ENCODE measurements at regions of chr4 and their contacts with region 1.

Region 1: DNA sequence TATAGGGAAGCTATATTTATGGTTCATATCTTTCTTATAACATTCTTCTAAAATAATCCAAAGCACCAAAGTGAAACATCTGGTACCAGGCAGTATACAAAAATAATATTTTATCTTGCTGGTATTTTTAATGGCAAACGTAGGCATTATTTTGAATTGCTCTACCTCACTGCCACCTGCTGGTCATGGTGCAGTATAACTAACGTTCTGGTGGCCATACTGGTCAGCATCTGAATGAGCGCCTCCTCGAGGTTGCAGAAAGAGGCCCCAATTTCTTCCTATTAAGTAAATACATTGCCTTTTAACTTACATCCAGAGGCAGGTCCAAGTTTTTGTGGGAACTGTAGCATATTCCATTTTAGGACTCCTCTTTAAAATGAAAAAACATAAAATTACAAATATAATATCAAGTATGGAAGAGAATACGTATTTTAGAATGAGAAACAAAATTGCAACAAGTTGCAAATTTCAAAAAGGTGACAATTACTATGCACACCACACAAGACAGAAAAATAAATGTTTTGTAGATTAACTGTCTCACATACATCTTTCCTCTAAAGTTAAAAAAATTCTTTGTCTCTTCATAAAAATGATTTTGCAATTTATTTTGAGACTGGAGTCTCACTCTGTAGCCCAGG is 22.9 kb upstream of the CWH43 start:
- DNase-seq: peak; percentile 89
- H3K4me3 ChIP-seq: no peak overlapping the region
- H3K27ac ChIP-seq: no peak overlapping the region
- H3K4me1 ChIP-seq: no peaks in the 10 kb centered on the region
- CTCF ChIP-seq: peak; percentile 100

Region 2: DNA sequence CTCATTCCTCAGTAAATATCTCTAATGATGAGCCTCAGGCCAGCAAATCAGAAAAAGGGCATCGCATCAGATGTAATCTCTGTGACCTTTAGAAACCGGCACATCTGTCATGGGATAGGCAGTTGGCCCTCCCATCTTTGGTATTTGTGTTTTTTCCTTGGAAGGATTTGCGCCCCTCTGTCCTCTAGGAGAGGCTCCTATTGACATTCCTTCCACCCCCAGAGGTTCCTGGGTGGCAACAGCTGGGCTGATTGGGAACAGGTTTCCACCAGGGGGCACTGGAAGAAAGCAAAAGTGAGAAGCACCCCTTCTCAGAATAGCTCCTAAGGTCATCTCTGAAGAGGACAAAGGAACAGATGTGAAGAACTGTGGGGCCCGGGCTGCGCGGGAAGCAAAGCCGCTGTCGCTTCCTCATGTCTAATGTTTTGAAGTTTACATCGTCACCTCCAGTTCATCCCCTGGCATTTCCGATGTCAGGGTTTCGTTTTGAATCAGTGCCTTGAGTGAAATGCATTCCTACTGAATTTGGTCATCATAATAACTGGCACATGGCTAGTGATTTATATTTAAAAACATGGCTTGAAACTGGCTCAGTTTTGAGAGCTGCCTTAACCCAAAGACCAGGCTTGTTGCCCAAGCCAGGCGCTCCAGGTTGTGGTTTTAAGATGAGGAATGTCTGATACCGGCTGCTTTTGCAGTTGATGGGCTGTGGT is 835.3 kb before region 1 on chr4:
- CTCF ChIA-PET with region 1: no interaction called
- POLR2A ChIA-PET with region 1: no interaction called
- intact Hi-C with region 1: loop called (anchors 10 kb)
- DNase-seq: peak; percentile 65
- H3K4me3 ChIP-seq: no peak overlapping the region
- H3K27ac ChIP-seq: no peak overlapping the region
- H3K4me1 ChIP-seq: no peaks in the 10 kb centered on the region
- CTCF ChIP-seq: peak; percentile 82

Region 3: DNA sequence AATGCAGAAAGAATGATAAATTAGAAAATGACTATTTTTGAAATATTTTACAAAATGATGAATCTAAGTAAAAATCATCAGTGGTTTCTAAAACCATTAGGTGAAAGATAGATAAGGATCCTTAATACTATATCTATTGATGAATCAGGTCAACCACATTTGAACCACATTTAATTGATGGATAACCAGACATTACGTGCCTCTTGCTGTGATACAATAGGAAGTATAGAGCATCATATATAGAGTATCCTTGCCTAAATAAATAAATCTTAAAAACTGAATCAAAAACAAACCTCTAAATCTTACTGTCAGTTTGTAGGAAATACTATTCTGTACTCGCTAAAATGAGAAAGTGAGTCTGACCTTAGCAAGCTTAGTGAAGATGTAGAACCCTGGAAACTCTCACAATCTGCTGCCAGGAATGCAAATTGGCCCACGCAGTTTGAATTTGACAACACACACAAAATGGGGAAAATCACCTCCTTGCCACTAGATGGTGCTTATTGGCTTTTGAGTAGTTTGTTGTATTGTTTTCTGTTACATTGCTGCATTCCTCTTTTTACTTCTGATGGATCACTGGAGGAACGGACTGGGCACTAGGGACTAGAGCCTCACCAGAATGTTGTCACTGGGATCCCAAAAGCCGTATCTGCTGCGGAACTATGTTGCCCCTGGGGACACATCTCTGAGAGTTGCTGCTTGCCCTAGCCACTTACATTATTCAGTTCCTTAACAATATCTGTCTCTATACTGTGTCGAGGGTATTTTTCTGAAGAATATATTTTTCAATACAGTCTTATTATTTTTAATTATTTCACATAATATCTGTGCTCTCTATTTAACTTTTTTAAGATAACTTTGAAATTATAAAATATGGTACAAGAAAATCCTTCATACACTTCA is 647.2 kb before region 1 on chr4:
- CTCF ChIA-PET with region 1: no interaction called
- POLR2A ChIA-PET with region 1: no interaction called
- intact Hi-C with region 1: loop called (anchors 5 kb)
- DNase-seq: peak; percentile 53
- H3K4me3 ChIP-seq: no peak overlapping the region
- H3K27ac ChIP-seq: no peak overlapping the region
- H3K4me1 ChIP-seq: no peaks in the 10 kb centered on the region
- CTCF ChIP-seq: peak; percentile 85

Region 4: GRCh38 chr4:48445704-48446103 is 517.5 kb before region 1 on chr4:
- CTCF ChIA-PET with region 1: no interaction called
- POLR2A ChIA-PET with region 1: no interaction called
- intact Hi-C with region 1: loop called (anchors 2 kb)
- DNase-seq: peak; percentile 19
- H3K4me3 ChIP-seq: no peak overlapping the region
- H3K27ac ChIP-seq: no peak overlapping the region
- H3K4me1 ChIP-seq: no peaks in the 10 kb centered on the region
- CTCF ChIP-seq: peak; percentile 72

Region 5: DNA sequence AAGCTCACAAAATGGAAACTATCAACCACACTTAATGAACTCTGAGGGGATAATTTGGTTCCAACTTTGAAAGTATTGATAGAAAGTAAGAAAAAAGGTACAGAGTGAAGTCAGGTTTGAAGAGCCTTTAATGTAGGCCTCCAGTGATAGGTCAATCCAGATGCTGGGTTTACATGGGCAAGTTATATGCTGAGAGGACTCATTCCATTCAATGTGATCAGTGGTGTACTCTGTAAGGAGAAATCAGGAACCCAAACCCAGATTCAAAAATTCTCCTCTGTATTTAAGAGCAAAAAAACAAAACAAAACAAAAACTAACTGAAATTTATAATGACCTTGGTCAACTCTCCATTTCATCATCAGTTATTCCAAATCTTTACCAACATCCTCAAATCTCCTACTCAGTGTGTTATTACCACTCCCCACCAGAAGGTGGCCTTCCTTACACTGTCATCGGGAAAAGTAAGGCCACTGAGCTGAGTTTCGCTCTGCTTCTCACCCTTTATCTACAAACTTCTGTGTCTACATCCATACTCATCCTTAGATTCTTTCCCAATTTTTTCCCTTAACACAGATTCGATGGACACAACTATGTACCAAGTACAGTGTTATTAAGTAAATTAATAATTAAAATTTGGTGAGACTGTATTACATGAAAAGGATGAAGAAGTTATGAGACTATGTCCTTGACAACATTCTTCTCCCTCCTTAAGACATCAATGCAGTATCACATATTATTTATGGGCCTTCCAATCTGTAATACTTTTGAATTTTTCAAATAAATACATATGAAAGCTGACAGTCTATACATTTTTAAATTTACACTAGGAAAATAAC is 384.8 kb before region 1 on chr4:
- CTCF ChIA-PET with region 1: no interaction called
- POLR2A ChIA-PET with region 1: interaction called, 4 read pairs
- intact Hi-C with region 1: loop called (anchors 1 kb)
- DNase-seq: peak; percentile 72
- H3K4me3 ChIP-seq: no peak overlapping the region
- H3K27ac ChIP-seq: no peak overlapping the region
- H3K4me1 ChIP-seq: no peaks in the 10 kb centered on the region
- CTCF ChIP-seq: peak; percentile 96

Region 6: DNA sequence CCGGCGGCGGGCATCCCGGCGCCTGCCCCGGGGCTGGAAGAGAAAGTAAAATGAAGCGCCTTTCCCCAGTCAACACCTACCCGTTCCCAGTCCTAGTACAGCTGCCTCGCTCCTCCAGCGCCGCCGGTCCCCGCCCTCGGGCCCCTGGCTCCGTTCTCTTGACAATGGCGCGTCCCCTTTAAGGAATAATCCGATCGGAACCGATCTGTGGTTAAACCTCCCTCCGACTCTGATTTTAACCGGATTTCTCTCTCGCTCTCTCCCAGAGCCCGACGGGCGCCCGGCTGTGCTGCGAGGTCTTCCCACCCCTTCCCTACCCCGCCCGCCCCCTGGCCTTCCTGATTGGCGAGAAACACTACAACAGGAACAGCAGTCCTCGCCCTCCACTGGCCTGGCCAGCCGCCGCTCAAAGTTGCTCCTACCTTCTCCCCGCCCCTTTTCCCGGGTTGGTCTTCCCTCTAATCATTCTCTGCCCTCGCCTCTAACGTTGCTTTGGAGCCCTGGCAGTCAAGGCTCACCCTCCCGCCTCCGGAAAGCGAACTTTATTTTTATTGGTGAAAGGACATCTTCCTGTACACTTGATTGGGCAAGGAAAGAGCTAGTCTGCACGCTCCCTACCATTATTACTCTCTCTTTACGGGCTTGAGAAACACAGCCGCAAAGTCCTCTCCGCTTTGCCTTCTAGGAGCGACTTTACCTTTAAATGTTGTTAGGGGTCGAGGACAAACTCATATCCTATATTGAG is 183.0 kb before region 1 on chr4 and contains the start of gene FRYL:
- CTCF ChIA-PET with region 1: no interaction called
- POLR2A ChIA-PET with region 1: no interaction called
- intact Hi-C with region 1: loop called (anchors 2 kb)
- DNase-seq: peak; percentile 99
- H3K4me3 ChIP-seq: peak within 1 kb of the TSS; percentile 83
- H3K27ac ChIP-seq: peak within 1 kb of the TSS; percentile 90
- H3K4me1 ChIP-seq: peaks cover 47% of the 10 kb centered on the region
- CTCF ChIP-seq: no peak
- total RNA-seq, gene FRYL: 85.4 and 91.9 TPM in 2 replicates

Region 7: DNA sequence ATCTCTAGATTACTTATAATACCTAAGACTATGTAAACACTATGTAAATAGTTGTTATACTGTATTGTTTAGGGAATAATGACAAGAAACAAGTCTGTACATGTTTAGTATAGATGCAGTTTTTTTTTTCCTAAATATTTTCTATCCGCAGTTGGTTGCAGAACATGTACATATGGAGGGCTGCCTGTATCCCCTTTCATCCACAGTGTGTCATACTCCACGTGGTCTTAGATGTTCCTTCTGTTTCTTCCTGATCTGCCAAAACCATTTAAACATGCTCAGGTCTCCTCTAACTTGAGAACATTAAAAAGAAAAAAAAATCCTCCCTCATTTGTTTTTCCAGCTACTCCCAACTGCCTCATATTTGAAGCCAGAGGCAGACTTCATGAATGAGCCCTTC is 118.3 kb before region 1 on chr4:
- CTCF ChIA-PET with region 1: no interaction called
- POLR2A ChIA-PET with region 1: no interaction called
- intact Hi-C with region 1: no loop called
- DNase-seq: no peak
- H3K4me3 ChIP-seq: no peak overlapping the region
- H3K27ac ChIP-seq: no peak overlapping the region
- H3K4me1 ChIP-seq: no peaks in the 10 kb centered on the region
- CTCF ChIP-seq: no peak

Measured in OCI-LY7 (cell line).